ENCODE measurements at regions of chr15 and their contacts with region 1.

Region 1: GRCh38 chr15:76931397-76932007 is at the start of gene RCN2:
- DNase-seq: peak; percentile 94
- H3K4me3 ChIP-seq: peak within 1 kb of the TSS; percentile 67 to 77 (median 73)
- H3K27ac ChIP-seq: peak within 1 kb of the TSS; percentile 37
- H3K4me1 ChIP-seq: no peaks in the 10 kb centered on the region
- H3K27me3 ChIP-seq: no peaks in the 10 kb centered on the region
- CTCF ChIP-seq: no peak
- total RNA-seq, gene RCN2: 47.0 to 51.3 TPM

Region 2: DNA sequence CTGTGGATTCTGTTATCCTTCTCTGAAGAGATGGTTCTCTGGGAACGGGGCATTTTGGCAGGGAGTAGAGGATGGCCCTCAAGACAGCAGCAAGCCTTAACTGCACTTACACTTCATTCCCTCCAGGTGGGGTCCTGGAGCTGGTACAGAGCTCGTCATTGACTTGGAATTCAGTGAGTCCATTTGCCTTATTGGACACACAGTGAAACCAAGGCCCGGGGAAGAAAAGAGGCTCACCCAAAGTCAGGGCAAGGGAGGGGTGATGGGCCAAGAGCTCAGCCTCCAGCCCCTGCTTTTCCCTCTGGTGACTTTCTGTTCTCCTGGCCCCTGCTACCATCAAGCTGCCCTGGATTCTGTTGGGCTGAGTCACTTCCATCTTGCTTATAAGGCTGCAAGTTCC is 745.8 kb before region 1 on chr15:
- CTCF ChIA-PET with region 1: no interaction called
- dilution Hi-C with region 1: no loop called
- in situ Hi-C with region 1: no loop called
- intact Hi-C with region 1: loop called (anchors 1 kb)
- DNase-seq: peak; percentile 61
- H3K4me3 ChIP-seq: no peak overlapping the region
- H3K27ac ChIP-seq: no peak overlapping the region
- H3K4me1 ChIP-seq: peaks cover 11% of the 10 kb centered on the region
- H3K27me3 ChIP-seq: no peaks in the 10 kb centered on the region
- CTCF ChIP-seq: peak; percentile 63 to 69

Region 3: DNA sequence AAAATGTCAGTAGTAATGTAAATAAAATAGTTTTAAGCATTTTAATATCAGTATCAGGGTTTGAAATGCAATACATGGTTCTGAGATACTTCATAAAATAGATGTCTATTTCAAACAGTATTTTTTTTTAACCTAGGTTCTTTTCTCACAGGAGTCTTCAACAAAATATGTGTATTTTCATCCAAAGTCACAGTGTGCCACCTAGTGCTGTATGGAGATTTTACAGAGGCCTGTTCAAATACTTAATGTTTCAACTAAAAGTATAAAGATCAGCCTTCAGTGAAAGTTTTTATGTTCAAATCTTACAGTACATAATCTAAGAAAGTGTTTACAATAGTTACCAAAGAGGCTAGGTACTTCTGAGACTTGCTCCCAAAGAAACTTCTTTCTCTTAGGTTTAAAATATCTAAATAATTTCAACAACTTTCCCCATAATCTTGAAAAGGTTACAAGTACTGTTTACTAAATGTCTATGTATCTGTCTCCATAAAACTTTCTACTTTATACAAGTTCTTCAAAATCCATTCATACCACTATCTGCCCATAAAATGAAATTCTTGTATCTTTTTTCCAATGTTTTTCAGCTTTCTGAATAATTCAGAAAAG is 64.7 kb before region 1 on chr15:
- CTCF ChIA-PET with region 1: no interaction called
- dilution Hi-C with region 1: no loop called
- in situ Hi-C with region 1: no loop called
- intact Hi-C with region 1: no loop called
- DNase-seq: peak; percentile 5
- H3K4me3 ChIP-seq: no peak overlapping the region
- H3K27ac ChIP-seq: no peak overlapping the region
- H3K4me1 ChIP-seq: no peaks in the 10 kb centered on the region
- H3K27me3 ChIP-seq: no peaks in the 10 kb centered on the region
- CTCF ChIP-seq: peak; percentile 30 to 51

Region 4: GRCh38 chr15:76905013-76905839 is 26.3 kb before region 1 on chr15 and contains the start of gene SCAPER:
- CTCF ChIA-PET with region 1: no interaction called
- dilution Hi-C with region 1: no loop called
- in situ Hi-C with region 1: no loop called
- intact Hi-C with region 1: loop called (anchors 2 kb)
- DNase-seq: peak; percentile 84
- H3K4me3 ChIP-seq: peak within 1 kb of the TSS; percentile 85 to 97 (median 91)
- H3K27ac ChIP-seq: peak within 1 kb of the TSS; percentile 43
- H3K4me1 ChIP-seq: peaks cover 12% of the 10 kb centered on the region
- H3K27me3 ChIP-seq: no peaks in the 10 kb centered on the region
- CTCF ChIP-seq: no peak
- total RNA-seq, gene SCAPER: 9.2 to 11.6 TPM